ENCODE measurements at regions of chr15 and their contacts with region 1.

Region 1: DNA sequence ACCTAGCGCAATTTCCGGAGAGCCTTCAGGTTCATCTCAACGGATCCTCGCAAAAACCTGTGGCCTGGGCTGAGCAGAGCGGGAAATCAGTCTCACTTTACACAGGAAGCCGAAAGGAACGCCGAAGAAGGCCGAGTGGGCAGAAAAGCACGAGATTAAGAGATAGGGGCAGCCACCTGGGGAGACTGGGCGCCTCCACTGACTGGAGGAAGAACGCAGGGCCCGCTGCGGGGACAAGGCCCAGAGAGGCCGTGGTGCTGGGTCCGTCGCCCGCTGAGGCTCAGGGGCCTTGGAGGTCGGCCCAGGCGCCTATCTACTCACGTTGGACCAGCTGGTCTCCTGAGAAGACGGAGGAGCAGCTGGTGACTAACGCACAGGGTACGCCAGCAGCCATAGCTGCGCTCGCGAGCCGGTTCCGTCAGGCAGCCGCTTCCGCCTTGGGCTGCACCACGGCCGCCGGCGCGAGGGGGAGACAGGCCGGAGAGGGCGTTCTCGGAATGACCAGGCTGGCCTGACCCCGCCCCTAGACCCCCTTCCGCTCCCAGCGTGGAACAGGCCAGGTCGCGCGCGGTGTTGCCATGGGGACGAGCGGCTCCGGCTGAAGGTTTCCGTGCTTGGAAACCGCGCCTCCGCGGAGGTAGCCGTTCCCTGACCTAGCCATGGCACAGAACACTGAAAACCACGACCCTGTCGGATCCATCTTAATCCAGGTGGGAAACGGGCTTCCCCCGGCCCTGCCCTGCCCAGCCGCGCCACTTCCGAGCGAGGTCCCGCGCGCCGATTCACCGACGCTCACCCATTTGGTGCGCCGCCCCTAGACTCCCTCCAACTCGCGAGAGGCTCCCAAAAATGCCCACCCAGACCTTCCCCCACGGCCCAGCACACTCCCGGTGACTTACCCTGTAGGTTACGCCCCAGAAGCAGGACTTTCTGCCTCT is at the starts of genes AAGAB and IQCH:
- DNase-seq: peak; percentile 96
- H3K4me3 ChIP-seq: peak within 1 kb of the TSS; percentile 91
- H3K27ac ChIP-seq: peak within 1 kb of the TSS; percentile 69
- H3K4me1 ChIP-seq: peaks cover 14% of the 10 kb centered on the region
- CTCF ChIP-seq: no peak
- total RNA-seq, gene AAGAB: 31.0 and 36.2 TPM in 2 replicates
- total RNA-seq, gene IQCH: 3.9 and 6.8 TPM in 2 replicates

Region 2: GRCh38 chr15:67065444-67066093 is 188.9 kb before region 1 on chr15 and contains the start of gene SMAD3:
- CTCF ChIA-PET with region 1: no interaction called
- POLR2A ChIA-PET with region 1: no interaction called
- intact Hi-C with region 1: loop called (anchors 5 kb)
- DNase-seq: peak; percentile 92
- H3K4me3 ChIP-seq: peak within 1 kb of the TSS; percentile 100
- H3K27ac ChIP-seq: peak within 1 kb of the TSS; percentile 76
- H3K4me1 ChIP-seq: peaks cover 32% of the 10 kb centered on the region
- CTCF ChIP-seq: no peak
- total RNA-seq, gene SMAD3: 32.8 and 41.2 TPM in 2 replicates

Measured in OCI-LY7 (cell line).